HepG2 (cell line): ENCODE measurements at regions of chr11 and their contacts with region 1.

Region 1: GRCh38 chr11:70303070-70303469 is 32.6 kb downstream of the PPFIA1 start:
- DNase-seq: no peak
- ATAC-seq: no peak
- H3K4me3 ChIP-seq: no peak overlapping the region
- H3K27ac ChIP-seq: peak overlapping the region; percentile 54
- H3K4me1 ChIP-seq: peaks cover 43% of the 10 kb centered on the region
- H3K27me3 ChIP-seq: no peaks in the 10 kb centered on the region
- CTCF ChIP-seq: no peak
- EP300 ChIP-seq: no peak
- POLR2A ChIP-seq: no peak
- RAD21 ChIP-seq: no peak

Region 2: DNA sequence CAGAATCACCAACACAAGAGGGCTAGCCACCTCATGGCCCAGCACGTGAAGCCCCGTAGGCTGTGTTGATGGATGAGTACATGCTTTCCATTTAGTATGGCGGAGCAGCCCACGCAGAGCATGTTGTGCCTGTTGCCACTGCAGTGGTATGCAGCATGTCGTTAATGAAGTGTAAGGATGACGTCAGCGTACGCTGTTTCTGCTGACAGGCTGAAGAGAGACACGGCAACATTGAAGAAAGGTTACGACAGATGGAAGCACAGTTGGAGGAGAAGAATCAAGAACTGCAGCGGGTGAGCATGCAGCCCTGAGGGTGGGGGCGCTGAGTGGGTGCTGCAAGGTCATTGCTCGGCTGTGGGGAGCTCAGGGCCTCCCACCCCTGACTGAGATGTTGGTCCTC is 30.2 kb after region 1 on chr11:
- CTCF ChIA-PET with region 1: no interaction called
- POLR2A ChIA-PET with region 1: no interaction called
- in situ Hi-C with region 1: no loop called
- intact Hi-C with region 1: loop called (anchors 2 kb)
- DNase-seq: no peak
- ATAC-seq: no peak
- H3K4me3 ChIP-seq: no peak overlapping the region
- H3K27ac ChIP-seq: no peak overlapping the region
- H3K4me1 ChIP-seq: no peaks in the 10 kb centered on the region
- H3K27me3 ChIP-seq: no peaks in the 10 kb centered on the region
- CTCF ChIP-seq: no peak
- EP300 ChIP-seq: no peak
- POLR2A ChIP-seq: no peak
- RAD21 ChIP-seq: no peak